Mammary epithelial cell (primary cell): ENCODE measurements at regions of chr15 and their contacts with region 1.

Region 1: DNA sequence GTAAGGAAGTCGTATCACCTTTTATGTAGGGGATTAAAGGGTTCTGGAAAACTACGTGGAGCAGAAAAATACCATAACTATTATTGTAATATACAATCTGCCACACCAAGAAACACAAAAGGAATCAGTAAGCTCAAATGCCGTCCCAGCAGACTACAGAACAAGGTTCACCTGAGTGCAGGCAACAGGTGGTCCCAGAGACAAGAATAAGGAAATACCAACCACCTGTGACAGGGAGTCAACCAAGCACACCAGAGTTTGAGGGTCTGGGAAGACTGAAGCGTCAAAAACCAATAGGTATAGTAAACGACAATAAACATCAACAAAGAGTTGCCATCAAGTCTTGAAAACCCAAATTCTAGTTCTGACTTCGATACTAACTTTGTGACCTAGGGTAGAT is 12.1 kb downstream of the SLC24A5 start:
- DNase-seq: no peak
- H3K4me3 ChIP-seq: no peak overlapping the region
- H3K27ac ChIP-seq: no peak overlapping the region
- H3K4me1 ChIP-seq: no peaks in the 10 kb centered on the region
- H3K27me3 ChIP-seq: no peaks in the 10 kb centered on the region
- CTCF ChIP-seq: no peak

Region 2: DNA sequence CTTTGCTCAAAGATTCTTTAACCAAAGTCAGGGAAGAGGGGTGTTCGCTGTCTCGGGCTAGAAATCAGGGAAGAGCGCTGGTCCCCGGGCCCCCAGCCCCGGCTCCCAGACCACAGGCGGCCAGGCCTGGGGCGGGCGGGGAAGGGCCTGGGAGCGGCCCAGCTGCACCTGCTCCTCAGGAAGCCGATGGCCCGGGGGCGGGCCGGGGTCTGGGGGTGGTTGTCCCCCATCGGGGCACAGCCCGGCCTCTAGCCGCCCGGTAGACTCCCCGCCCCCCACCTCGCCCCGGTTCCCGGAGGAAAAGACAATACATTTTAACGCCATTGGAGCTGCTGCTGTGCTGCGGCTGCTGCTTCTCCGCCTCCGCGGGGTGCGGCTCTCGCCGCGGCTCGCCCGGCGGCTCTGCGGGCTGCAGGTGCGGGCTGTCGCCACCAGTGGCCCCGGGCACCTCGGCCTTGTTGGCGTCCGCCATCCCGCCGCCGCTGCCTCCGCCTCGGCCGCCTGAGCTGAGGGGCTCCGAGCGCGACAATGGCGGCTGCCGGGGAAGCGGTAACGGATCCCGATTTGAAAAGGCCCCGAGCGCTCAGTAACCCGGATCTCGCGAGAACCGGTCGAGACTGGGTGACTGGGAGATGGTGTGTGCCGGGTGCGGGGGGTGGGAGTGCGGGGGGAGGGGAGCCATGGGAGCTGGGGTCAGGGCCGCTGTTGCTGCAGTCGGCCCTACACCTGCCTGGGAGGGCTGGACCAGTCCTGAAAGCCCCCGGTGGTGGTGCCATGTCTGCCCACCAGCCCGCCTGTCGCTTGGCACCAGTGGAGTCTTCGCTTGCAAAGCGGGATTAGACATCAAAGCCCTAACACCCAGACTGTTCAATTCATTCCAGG is 45.1 kb after region 1 on chr15 and contains the start of gene MYEF2:
- CTCF ChIA-PET with region 1: no interaction called
- dilution Hi-C with region 1: no loop called
- in situ Hi-C with region 1: no loop called
- intact Hi-C with region 1: loop called (anchors 1 kb)
- DNase-seq: peak; percentile 18
- H3K4me3 ChIP-seq: peak within 1 kb of the TSS; percentile 26 to 49 (median 47)
- H3K27ac ChIP-seq: no peak within 1 kb of the TSS
- H3K4me1 ChIP-seq: peaks cover 6% of the 10 kb centered on the region
- H3K27me3 ChIP-seq: peaks cover 11% of the 10 kb centered on the region
- CTCF ChIP-seq: no peak
- total RNA-seq, gene MYEF2: 2.3 to 5.0 TPM